ENCODE measurements at regions of chr3 and their contacts with region 1.

Region 1: GRCh38 chr3:141913150-141913811 is 36.8 kb downstream of the ATP1B3 start:
- DNase-seq: peak; percentile 39
- H3K4me3 ChIP-seq: no peak overlapping the region
- H3K27ac ChIP-seq: no peak overlapping the region
- H3K4me1 ChIP-seq: no peaks in the 10 kb centered on the region
- H3K27me3 ChIP-seq: no peaks in the 10 kb centered on the region
- CTCF ChIP-seq: peak; percentile 60 to 77 (median 64)
- EP300 ChIP-seq: no peak
- POLR2A ChIP-seq: no peak

Region 2: DNA sequence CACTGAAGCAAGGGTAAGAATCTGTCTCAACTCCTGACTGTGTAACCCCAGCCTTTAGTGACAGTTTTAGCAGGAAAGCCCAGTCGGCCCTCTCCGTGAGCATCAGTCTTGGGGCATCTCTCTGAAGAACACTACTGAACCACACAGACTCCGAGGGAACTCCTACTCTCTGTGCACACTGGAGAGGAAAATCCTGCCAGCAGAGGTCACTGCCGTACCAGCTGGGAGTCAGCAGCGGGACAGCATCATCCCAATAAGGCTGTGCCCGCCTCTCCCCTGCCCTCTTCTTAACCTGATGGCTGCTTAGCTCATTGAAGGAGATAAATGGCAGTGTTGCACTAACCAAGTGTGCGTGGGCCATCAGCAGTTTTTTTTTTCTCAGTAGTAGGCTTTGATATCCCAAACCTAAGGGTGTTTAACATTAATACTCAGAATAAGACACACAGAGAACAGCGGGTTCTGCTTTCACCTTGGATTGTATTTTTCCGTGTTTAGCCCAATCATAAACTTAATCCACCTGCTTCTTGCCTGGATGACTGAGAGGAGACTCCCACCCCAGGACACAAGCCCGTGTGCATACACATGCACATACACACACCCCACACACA is 453.1 kb before region 1 on chr3:
- in situ Hi-C with region 1: loop called in 1 of 4 experiments (anchors 25 kb)
- intact Hi-C with region 1: no loop called
- DNase-seq: peak; percentile 90
- H3K4me3 ChIP-seq: no peak overlapping the region
- H3K27ac ChIP-seq: no peak overlapping the region
- H3K4me1 ChIP-seq: peaks cover 0 to 7% (median 6%) of the 10 kb centered on the region in 4 donors
- H3K27me3 ChIP-seq: no peaks in the 10 kb centered on the region
- CTCF ChIP-seq: peak; percentile 76 to 86 (median 82)
- EP300 ChIP-seq: no peak
- POLR2A ChIP-seq: no peak

Region 3: GRCh38 chr3:141575879-141576743 is 337.2 kb before region 1 on chr3:
- in situ Hi-C with region 1: loop called in 2 of 4 experiments (anchors 10 to 25 kb)
- intact Hi-C with region 1: no loop called
- DNase-seq: no peak
- H3K4me3 ChIP-seq: peak overlapping the region in 3 of 4 donors; percentile 0 to 14 (median 11)
- H3K27ac ChIP-seq: peak overlapping the region; percentile 17 to 59 (median 53)
- H3K4me1 ChIP-seq: peaks cover 0 to 13% (median 0%) of the 10 kb centered on the region in 4 donors
- H3K27me3 ChIP-seq: no peaks in the 10 kb centered on the region
- CTCF ChIP-seq: peak; percentile 51 to 69 (median 58)
- EP300 ChIP-seq: no peak
- POLR2A ChIP-seq: no peak

Region 4: GRCh38 chr3:141605883-141606282 is 307.4 kb before region 1 on chr3:
- in situ Hi-C with region 1: loop called in 1 of 4 experiments (anchors 25 kb)
- intact Hi-C with region 1: no loop called
- DNase-seq: no peak
- H3K4me3 ChIP-seq: no peak overlapping the region
- H3K27ac ChIP-seq: no peak overlapping the region
- H3K4me1 ChIP-seq: no peaks in the 10 kb centered on the region
- H3K27me3 ChIP-seq: no peaks in the 10 kb centered on the region
- CTCF ChIP-seq: no peak
- EP300 ChIP-seq: no peak
- POLR2A ChIP-seq: no peak

Region 5: DNA sequence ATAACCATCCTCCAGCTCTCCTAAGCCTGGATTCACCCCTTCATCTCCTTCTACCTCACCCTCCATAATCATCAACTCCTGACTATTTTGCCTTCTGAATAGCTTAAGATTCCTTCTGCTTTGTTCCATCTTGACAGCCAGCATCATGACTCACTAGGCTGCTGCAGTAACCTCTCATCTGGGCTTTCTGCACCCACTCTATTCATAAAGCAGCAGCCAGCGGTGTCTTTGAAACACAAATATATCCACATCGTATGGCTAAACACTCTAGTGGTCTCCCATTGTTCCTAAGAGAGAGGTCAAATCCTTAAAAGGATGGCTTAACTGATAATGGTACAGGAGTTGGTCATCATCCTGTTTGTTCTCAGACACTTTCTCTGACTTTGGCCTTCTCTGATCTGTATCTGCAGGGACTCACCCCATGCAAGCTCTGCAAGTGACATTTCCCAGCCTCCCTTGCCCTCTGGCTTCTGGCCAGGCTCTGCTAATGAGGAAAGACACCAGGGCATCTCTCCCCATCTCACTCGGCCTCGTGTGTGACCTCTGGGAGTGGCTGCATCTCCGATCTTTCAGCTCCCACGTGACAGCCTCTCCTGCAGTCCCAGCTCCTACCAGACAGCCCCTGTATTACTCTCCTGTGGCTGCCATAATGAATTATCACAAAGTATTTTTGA is 143.9 kb before region 1 on chr3:
- in situ Hi-C with region 1: no loop called
- intact Hi-C with region 1: no loop called
- DNase-seq: no peak
- H3K4me3 ChIP-seq: no peak overlapping the region
- H3K27ac ChIP-seq: no peak overlapping the region
- H3K4me1 ChIP-seq: no peaks in the 10 kb centered on the region
- H3K27me3 ChIP-seq: no peaks in the 10 kb centered on the region
- CTCF ChIP-seq: no peak
- EP300 ChIP-seq: no peak
- POLR2A ChIP-seq: no peak

Region 6: DNA sequence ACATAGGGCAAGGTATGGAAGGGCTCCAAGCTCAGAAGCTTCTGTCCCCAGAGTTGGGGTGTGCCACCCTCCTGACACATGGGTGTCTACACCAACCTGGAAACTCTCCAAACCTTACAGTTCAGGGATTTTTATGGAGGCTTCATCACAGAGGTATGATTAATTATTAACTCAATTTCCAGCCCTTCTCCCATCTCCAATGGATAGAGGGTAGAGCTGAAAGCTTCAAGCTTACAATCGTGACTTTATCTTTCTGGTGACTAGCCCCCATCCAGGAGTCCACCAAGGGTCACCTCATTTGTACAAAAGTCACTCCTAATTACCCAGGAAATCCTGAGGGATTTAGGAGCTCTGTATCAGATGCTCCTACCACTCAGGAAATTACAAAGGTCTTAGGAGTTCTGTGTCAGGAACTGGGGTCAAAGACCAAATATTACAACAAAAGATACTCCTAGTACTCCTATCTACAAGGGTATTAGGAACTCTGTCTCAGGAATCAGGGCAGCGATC is 173.4 kb after region 1 on chr3:
- in situ Hi-C with region 1: no loop called
- intact Hi-C with region 1: no loop called
- DNase-seq: peak; percentile 52
- H3K4me3 ChIP-seq: no peak overlapping the region
- H3K27ac ChIP-seq: peak overlapping the region; percentile 53 to 66 (median 64)
- H3K4me1 ChIP-seq: peaks cover 0 to 24% (median 2%) of the 10 kb centered on the region in 4 donors
- H3K27me3 ChIP-seq: no peaks in the 10 kb centered on the region
- CTCF ChIP-seq: no peak
- EP300 ChIP-seq: no peak
- POLR2A ChIP-seq: no peak